SK-N-SH (cell line): ENCODE measurements at regions of chr6 and their contacts with region 1.

Region 1: DNA sequence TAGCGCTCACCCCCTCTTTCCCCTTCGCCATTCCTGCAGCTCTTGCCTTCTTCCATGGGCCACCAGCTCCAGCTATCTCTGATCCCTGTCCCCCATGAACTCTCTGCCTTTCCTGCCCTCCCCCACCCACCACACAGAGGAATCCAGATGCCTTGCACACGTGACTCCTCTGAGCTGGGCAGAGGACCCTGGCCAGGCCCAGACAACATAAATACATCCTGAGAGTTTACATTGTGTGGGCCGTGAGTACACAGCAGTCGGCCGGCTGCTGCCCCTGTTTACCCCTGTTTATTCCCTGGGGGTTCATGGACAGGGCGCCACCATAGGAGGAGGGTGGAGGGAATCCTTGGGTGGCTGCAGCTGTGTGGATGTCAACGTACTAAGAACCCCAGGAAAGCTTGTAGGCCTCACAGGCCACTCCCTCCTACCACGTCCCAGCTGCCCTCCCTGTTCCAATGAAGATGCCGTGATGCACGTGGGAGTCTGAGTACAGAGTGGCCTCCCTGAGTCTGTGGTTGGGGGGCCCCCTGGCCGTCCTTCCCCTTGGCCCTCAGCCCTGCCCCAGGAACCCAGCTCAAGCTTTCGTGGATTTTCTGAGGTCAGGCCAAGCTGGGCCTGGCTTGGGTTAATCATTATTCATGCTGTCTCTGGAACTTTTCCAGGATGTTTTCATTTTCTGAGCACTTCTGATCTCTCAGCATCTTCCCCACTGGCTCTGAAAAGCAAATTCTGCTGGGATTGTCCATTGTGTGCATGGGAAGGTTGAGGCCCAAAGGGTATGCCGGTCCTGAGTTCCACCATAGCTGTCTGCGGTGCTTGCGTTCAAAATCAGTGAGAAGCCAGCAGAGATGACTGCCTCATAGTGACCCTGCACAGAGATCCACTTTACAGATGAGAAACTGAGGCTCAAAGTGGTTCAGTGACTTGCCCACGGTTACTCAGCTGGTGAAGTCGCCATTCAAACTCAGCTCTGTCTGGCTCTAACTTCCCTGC is 136.3 kb downstream of the MRPL14 start:
- DNase-seq: peak; percentile 83
- H3K4me3 ChIP-seq: no peak overlapping the region
- H3K27ac ChIP-seq: peak overlapping the region in 1 of 2 experiments; percentile 98; a peak in 3 of 4 replicates
- H3K4me1 ChIP-seq: peaks cover 17 to 68% of the 10 kb centered on the region in 2 experiments; a peak in 2 of 4 replicates
- H3K27me3 ChIP-seq: no peaks in the 10 kb centered on the region
- CTCF ChIP-seq: no peak
- EP300 ChIP-seq: peak in 1 of 2 experiments; percentile 59; a peak in 2 of 4 replicates
- RAD21 ChIP-seq: peak; percentile 22; the same call in 1 of the 2 replicates

Region 2: DNA sequence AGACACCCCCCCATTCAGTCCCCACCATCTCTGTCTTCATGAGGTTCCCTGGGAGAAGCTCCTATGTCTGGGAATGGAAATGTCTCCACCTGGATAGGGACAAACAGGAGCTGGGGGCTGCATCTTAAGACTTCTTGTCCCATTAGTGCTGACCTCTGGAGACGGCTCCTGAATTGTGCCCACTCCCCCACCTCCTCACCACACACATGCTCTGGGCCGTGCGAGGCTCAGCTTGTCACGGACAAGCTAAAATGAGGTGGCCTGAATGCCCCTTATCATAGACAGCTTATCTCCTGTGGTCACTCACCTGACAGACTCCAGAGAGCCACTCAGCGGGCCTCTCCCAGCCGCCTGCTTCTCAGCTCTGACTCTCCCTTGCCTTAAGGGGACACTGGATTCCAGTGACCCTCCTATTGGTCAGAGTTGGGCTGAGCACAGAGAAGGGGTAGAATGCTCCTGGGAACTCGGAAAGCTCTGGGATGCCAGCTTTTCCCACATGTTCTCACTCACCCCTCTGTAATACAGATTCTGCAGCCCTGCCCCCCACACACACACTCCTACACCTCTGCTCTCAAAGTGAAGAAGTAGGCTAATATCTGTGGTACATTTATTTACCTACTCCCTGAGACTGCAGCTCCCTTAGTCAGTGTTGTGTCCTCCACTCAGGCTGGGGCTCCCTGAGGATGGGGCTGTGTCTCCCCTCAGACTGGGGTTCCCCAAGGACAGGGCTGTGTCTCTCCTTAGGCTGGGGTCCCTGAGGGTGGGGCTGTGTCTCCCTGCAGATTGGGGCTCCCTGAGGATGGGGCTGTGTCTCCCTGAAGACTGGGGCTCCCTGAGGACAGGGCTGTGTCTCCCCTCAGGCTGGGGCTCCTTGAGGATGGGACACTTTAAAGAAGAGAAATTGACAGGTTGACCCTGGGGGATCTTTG is 53.4 kb before region 1 on chr6:
- CTCF ChIA-PET with region 1: interaction called, 10 read pairs
- POLR2A ChIA-PET with region 1: interaction called, 19 read pairs
- DNase-seq: peak; percentile 67
- H3K4me3 ChIP-seq: no peak overlapping the region
- H3K27ac ChIP-seq: peak overlapping the region in 1 of 2 experiments; percentile 100; a peak in 2 of 4 replicates
- H3K4me1 ChIP-seq: peaks cover 0 to 93% of the 10 kb centered on the region in 2 experiments; a peak in 3 of 4 replicates
- H3K27me3 ChIP-seq: no peaks in the 10 kb centered on the region
- CTCF ChIP-seq: no peak
- EP300 ChIP-seq: peak in 1 of 2 experiments; percentile 43; a peak in 2 of 4 replicates
- RAD21 ChIP-seq: 0 out of 2 replicates have a peak, but pooled peaks have one; percentile 17

Region 3: DNA sequence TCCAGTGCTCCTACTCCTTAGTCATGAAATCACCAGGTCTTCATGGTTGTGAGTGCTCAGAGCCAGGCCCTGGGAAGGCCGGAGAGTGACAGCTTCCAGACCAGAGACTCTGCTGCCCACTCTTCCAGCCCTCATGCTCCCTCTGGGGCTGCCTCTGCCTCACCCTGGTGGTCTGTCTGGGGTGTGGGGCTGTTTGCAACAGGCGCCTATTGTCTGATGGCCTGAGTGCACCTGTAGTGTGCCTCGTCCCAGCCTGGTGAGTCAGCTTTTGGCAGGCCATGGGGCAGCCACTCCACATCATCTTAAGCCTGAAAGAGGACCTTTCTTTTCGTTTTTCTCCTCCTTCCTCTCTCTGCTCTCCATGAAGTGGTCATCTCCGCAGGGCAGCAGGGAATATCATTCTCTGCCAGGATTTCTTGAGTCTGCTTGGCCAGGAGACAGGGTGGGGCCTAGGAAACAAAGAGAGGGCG is 47.1 kb before region 1 on chr6:
- CTCF ChIA-PET with region 1: interaction called, 10 read pairs
- POLR2A ChIA-PET with region 1: interaction called, 19 read pairs
- DNase-seq: no peak
- H3K4me3 ChIP-seq: no peak overlapping the region
- H3K27ac ChIP-seq: peak overlapping the region in 1 of 2 experiments; percentile 100; a peak in 2 of 4 replicates
- H3K4me1 ChIP-seq: peaks cover 0 to 51% of the 10 kb centered on the region in 2 experiments; a peak in 3 of 4 replicates
- H3K27me3 ChIP-seq: no peaks in the 10 kb centered on the region
- CTCF ChIP-seq: no peak
- EP300 ChIP-seq: no peak
- RAD21 ChIP-seq: no peak

Region 4: DNA sequence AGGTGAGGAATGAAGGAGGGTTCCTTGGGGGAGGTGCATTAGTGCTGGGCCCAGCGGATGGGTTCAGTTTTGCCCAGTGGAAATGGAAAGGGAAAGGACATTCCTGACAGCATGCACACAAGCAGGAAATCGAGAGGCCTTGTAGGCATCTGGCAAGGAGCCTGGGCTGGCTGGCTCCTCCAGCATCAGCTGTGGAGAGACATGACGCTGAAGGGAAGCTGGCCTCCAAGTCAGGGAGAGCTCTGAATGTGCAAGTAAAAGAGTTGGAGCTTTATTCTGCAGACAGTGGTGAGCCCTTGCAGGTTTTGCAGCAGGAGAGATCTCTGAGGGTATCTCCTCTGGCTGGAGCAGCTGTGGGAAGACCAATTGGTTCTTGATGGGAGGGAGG is 18.0 kb before region 1 on chr6:
- CTCF ChIA-PET with region 1: interaction called, 3 read pairs
- POLR2A ChIA-PET with region 1: interaction called, 11 read pairs
- DNase-seq: no peak
- H3K4me3 ChIP-seq: no peak overlapping the region
- H3K27ac ChIP-seq: peak overlapping the region; percentile 42 to 81
- H3K4me1 ChIP-seq: peaks cover 9 to 43% of the 10 kb centered on the region in 2 experiments; a peak in 3 of 4 replicates
- H3K27me3 ChIP-seq: no peaks in the 10 kb centered on the region
- CTCF ChIP-seq: no peak
- EP300 ChIP-seq: no peak
- RAD21 ChIP-seq: no peak

Region 5: DNA sequence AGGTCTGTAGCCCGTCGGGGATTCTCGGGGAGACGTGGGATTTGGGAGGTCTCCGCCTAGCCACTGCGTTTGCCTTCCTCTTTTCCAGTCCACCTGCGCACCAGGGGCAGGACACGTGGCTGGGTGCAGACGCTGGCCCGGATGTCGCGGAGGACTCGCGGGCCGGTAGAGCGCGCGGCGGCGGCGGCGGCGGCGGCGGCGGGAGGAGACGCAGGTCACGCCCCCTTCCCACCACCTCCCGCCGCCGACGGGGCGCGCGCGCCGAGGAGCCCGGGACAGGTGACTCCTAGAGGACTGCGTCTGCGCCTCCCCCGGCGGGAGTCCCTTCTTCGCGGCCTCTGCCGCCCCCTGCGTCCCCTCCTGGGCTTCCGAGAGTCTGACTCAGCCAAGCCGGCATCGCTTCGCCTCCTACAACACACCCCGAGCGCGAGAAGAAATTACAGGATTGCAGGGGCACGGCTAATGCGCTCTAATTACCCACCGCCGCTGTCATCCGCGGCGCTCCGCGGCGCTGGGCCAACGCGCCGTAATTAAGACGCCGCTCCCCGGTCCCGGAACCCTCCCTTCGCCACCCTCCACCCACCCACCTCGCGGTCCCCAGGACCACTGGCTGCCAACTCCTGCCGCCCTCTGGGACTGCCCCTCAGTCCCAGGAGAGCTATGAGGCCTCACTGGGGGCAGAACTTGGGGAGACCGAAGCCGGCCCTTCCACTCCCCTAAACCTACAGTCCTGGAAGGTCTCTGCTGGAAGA is 11.8 kb after region 1 on chr6:
- CTCF ChIA-PET with region 1: interaction called, 21 read pairs
- POLR2A ChIA-PET with region 1: interaction called, 6 read pairs
- DNase-seq: peak; percentile 72
- H3K4me3 ChIP-seq: no peak overlapping the region
- H3K27ac ChIP-seq: no peak overlapping the region
- H3K4me1 ChIP-seq: peaks cover 11 to 39% of the 10 kb centered on the region in 2 experiments; a peak in 3 of 4 replicates
- H3K27me3 ChIP-seq: no peaks in the 10 kb centered on the region
- CTCF ChIP-seq: no peak
- EP300 ChIP-seq: no peak
- RAD21 ChIP-seq: no peak

Region 6: DNA sequence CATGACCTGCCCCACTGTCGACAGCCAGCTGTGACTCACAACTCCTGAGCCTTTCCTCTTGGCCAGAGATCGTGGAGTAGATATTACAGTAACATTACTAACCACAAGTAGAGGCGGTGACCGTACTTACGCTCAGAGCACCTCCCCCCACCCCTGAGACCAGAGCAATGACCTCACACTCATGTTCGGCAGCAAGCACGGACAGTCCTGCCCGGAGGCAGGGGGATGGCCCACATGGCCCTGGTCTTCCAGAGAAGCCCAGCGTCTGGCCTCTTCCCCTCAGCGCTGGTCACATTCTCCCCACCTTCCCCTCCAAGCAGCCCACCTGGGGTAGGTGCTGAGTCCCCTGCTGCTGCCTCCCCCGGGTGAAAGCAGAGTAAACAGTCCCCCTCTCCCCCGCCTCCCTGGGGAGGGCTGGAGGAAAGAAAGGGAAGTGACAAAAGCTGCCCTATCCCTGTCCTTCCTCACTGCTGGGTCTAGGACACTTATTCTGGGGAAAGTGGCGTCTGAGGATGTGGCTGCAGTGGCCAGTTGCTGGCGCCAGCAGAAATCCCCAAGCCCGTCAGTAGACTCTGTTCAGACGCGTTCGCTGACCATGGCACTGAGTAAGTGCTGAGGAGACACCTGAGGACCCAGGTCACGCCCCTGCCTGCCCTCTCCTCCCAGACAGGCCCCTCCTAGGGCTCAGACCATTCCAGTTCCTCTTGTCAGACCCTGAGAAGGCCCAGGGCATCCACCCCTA is 67.9 kb after region 1 on chr6:
- CTCF ChIA-PET with region 1: interaction called, 7 read pairs
- POLR2A ChIA-PET with region 1: interaction called, 24 read pairs
- DNase-seq: peak; percentile 81
- H3K4me3 ChIP-seq: no peak overlapping the region; a peak in 1 of 4 replicates
- H3K27ac ChIP-seq: peak overlapping the region; percentile 92 to 100
- H3K4me1 ChIP-seq: peaks cover 62 to 82% of the 10 kb centered on the region in 2 experiments
- H3K27me3 ChIP-seq: no peaks in the 10 kb centered on the region
- CTCF ChIP-seq: no peak
- EP300 ChIP-seq: peak; percentile 89 to 93
- RAD21 ChIP-seq: peak; percentile 43

Region 7: DNA sequence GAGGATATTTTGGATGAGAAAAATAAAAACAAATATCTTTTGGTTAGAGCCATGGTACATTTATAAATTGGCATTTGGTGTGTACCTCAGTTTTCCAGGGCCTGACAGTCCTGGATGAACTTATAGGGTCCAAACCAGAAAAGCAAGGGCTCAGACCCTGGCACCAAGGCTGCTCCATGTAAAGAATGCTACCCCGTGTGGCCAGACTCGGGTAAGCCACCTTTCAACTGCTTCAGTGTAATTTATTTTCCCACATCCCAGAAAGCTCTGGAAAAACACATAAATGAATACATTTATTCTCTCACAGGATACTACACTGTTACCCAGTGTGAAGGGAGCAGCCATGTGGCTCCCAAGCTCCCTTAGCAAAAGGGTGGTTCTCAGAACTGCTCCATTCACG is 122.5 kb after region 1 on chr6:
- CTCF ChIA-PET with region 1: no interaction called
- POLR2A ChIA-PET with region 1: no interaction called
- DNase-seq: peak; percentile 31
- H3K4me3 ChIP-seq: no peak overlapping the region
- H3K27ac ChIP-seq: no peak overlapping the region
- H3K4me1 ChIP-seq: peaks cover 22 to 23% of the 10 kb centered on the region in 2 experiments; a peak in 2 of 4 replicates
- H3K27me3 ChIP-seq: no peaks in the 10 kb centered on the region
- CTCF ChIP-seq: peak; percentile 40
- EP300 ChIP-seq: no peak
- RAD21 ChIP-seq: no peak